Activated naive CD8-positive, alpha-beta T cell treated with anti-CD3 and anti-CD28 coated beads, Interleukin-2, amount 10 ng/mL, durations not matched to agents 7 days and 5 days (primary cell): ENCODE measurements at regions of chr3 and their contacts with region 1.

Region 1: DNA sequence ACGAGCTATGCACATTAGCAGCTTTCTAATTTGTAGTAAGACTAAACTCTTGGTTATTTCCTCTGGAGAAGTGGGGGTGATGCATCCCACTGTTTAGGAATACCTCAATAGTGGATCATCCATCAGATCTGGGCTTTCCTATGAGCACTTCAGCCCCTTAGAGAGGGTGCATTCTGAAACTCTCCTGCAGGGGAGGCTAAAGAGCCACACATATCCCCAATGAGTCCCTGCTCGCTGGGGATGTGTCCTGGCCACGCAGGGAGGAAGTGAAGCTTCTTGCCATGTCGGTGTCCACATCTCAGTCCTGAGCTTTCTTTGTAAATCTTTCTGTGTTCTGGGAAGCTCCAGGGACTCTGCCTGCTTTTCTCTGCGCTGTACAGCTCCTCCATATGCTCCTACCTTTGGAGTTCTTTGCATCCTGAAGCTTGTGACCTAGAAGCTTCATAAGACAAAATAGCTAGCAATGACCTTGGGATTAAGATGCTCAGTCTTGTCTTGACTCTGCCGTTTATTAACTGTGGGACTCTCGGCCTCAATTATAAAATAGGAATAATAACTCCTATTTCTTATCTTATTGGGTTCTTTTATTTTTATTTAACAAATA is 28.3 kb upstream of the MASP1 start:
- DNase-seq: peak; percentile 59
- ATAC-seq: peak; percentile 74
- H3K4me3 Mint-ChIP-seq: no peak overlapping the region
- H3K27ac Mint-ChIP-seq: no peak overlapping the region
- H3K4me1 Mint-ChIP-seq: peaks cover 10% of the 10 kb centered on the region
- H3K27me3 Mint-ChIP-seq: peaks cover 32% of the 10 kb centered on the region

Region 2: GRCh38 chr3:187274977-187275338 is 44.8 kb before region 1 on chr3:
- POLR2A ChIA-PET with region 1: no interaction called
- DNase-seq: no peak
- ATAC-seq: no peak
- H3K4me3 Mint-ChIP-seq: no peak overlapping the region
- H3K27ac Mint-ChIP-seq: no peak overlapping the region
- H3K4me1 Mint-ChIP-seq: no peaks in the 10 kb centered on the region
- H3K27me3 Mint-ChIP-seq: peaks cover 5% of the 10 kb centered on the region

Region 3: DNA sequence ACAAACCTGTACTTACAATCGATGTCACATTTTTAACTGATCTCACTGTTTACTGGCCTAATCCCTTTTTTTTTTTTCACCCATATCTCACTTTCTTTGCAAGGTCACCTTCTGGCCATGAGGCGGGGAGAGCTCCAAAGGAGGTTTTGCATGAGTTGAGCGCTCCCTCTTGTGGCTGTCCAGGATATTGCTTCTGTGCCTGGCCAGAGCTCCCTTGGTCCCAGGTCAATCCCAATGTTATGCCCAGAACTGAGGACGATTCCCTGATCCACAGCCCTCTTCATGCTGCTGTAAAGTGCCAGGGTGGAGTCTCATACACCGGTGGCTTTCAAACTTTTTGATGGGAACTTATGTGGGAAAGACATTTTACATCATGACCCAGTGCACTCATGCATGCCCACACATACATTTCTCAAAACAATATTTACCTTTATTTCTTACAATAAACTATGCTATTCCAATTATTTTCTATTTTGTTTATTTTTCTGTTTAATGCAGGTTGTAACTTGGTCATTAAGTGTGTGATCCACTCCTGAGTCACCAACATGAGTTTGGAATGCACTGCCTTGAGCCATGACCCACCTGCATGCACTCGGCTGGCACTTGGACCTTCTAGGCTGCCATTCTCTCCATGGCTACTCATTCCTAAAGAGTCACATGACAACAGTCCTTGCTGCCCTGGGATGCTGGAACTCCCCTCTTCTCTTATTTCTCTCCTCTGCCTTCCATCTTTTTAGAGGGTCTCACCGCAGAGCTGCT is 360.0 kb after region 1 on chr3:
- POLR2A ChIA-PET with region 1: interaction called, 13 read pairs
- DNase-seq: peak; percentile 67
- ATAC-seq: peak; percentile 68
- H3K4me3 Mint-ChIP-seq: no peak overlapping the region
- H3K27ac Mint-ChIP-seq: no peak overlapping the region
- H3K4me1 Mint-ChIP-seq: peaks cover 2% of the 10 kb centered on the region
- H3K27me3 Mint-ChIP-seq: peaks cover 32% of the 10 kb centered on the region